ENCODE measurements at regions of chr3 and their contacts with region 1.

Region 1: GRCh38 chr3:128680602-128681368 is 30.2 kb upstream of the RPN1 start:
- DNase-seq: peak; percentile 93 to 98
- ATAC-seq: peak; percentile 87 to 97 (median 90)
- H3K4me3 ChIP-seq: peak overlapping the region; percentile 88
- H3K4me3 Mint-ChIP-seq: peak overlapping the region; percentile 93
- H3K27ac ChIP-seq: peak overlapping the region; percentile 99
- H3K27ac Mint-ChIP-seq: peak overlapping the region; percentile 81 to 99
- H3K4me1 ChIP-seq: peaks cover 42% of the 10 kb centered on the region
- H3K4me1 Mint-ChIP-seq: peaks cover 28 to 36% of the 10 kb centered on the region in 2 donors
- H3K27me3 ChIP-seq: no peaks in the 10 kb centered on the region
- H3K27me3 Mint-ChIP-seq: peaks cover 6 to 7% of the 10 kb centered on the region in 2 donors
- CTCF ChIP-seq: peak; percentile 95

Region 2: GRCh38 chr3:128617557-128618397 is 63.0 kb before region 1 on chr3:
- intact Hi-C with region 1: loop called (anchors 2 kb)
- DNase-seq: peak; percentile 99 to 100
- ATAC-seq: peak; percentile 91 to 97 (median 93)
- H3K4me3 ChIP-seq: peak overlapping the region; percentile 90
- H3K4me3 Mint-ChIP-seq: peak overlapping the region; percentile 98
- H3K27ac ChIP-seq: peak overlapping the region; percentile 93
- H3K27ac Mint-ChIP-seq: peak overlapping the region; percentile 91 to 97
- H3K4me1 ChIP-seq: peaks cover 22% of the 10 kb centered on the region
- H3K4me1 Mint-ChIP-seq: peaks cover 25 to 49% of the 10 kb centered on the region in 2 donors
- H3K27me3 ChIP-seq: no peaks in the 10 kb centered on the region
- H3K27me3 Mint-ChIP-seq: no peaks in the 10 kb centered on the region
- CTCF ChIP-seq: peak; percentile 99

Region 3: DNA sequence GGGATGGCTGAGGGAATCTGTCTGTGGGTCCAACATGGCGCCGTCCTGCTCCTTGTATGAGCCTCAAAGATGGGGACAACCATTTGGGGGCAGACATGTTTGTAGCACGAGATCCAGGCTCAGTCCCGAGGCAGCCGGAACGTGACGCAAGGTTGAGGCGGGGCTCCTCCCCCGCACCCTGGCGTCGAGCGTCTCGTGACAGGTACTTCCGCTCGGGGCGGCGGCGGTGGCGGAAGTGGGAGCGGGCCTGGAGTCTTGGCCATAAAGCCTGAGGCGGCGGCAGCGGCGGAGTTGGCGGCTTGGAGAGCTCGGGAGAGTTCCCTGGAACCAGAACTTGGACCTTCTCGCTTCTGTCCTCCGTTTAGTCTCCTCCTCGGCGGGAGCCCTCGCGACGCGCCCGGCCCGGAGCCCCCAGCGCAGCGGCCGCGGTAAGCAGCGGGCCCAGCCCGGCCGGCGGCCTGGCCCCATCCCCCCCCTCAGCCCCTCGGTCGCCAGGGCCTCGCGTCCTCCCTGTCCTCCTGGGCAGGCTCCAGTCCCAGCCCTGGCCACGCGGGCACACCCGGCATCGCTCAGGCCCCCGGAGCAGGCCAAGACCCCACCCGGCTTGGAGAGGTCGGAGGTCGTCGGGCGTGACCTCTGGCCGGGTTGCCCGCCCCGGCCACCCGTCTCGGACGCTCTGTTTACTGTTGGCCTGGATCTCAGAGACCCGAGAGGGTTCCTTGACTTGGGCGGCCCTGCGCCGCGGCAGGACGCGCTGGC is 45.3 kb after region 1 on chr3 and contains the start of gene RAB7A:
- intact Hi-C with region 1: loop called (anchors 1 kb)
- DNase-seq: peak; percentile 96 to 99
- ATAC-seq: peak; percentile 90 to 97 (median 95)
- H3K4me3 ChIP-seq: peak within 1 kb of the TSS; percentile 83
- H3K4me3 Mint-ChIP-seq: peak within 1 kb of the TSS; percentile 99
- H3K27ac ChIP-seq: peak within 1 kb of the TSS; percentile 75
- H3K27ac Mint-ChIP-seq: peak within 1 kb of the TSS; percentile 95 to 98
- H3K4me1 ChIP-seq: peaks cover 26% of the 10 kb centered on the region
- H3K4me1 Mint-ChIP-seq: peaks cover 53 to 58% of the 10 kb centered on the region in 2 donors
- H3K27me3 ChIP-seq: no peaks in the 10 kb centered on the region
- H3K27me3 Mint-ChIP-seq: peaks cover 2 to 8% of the 10 kb centered on the region in 2 donors
- CTCF ChIP-seq: no peak
- total RNA-seq, gene RAB7A: 218 to 233 (median 224) TPM

Region 4: DNA sequence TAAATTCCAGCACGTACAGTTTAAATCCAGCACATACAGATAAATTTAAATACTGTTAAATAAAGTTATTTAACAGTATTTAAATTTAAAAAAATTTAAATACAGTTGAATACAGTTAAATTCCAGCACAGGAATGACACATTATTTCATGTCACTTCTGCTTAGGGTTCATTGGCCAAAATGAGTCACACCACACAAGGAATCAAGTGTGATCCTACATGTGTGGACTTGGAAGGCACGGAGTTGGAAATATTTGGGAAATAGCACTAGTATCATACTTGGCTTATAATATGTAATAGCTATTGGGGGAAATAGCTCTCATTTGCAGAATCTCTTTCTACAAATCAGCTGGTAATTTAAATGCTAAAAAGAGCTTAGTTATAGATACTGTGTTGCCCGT is 55.8 kb after region 1 on chr3:
- intact Hi-C with region 1: no loop called
- DNase-seq: no peak
- ATAC-seq: no peak
- H3K4me3 ChIP-seq: no peak overlapping the region
- H3K4me3 Mint-ChIP-seq: no peak overlapping the region
- H3K27ac ChIP-seq: no peak overlapping the region
- H3K27ac Mint-ChIP-seq: peak overlapping the region in 1 of 2 donors; percentile 77
- H3K4me1 ChIP-seq: peaks cover 24% of the 10 kb centered on the region
- H3K4me1 Mint-ChIP-seq: peaks cover 67 to 76% of the 10 kb centered on the region in 2 donors
- H3K27me3 ChIP-seq: no peaks in the 10 kb centered on the region
- H3K27me3 Mint-ChIP-seq: no peaks in the 10 kb centered on the region
- CTCF ChIP-seq: no peak

Region 5: DNA sequence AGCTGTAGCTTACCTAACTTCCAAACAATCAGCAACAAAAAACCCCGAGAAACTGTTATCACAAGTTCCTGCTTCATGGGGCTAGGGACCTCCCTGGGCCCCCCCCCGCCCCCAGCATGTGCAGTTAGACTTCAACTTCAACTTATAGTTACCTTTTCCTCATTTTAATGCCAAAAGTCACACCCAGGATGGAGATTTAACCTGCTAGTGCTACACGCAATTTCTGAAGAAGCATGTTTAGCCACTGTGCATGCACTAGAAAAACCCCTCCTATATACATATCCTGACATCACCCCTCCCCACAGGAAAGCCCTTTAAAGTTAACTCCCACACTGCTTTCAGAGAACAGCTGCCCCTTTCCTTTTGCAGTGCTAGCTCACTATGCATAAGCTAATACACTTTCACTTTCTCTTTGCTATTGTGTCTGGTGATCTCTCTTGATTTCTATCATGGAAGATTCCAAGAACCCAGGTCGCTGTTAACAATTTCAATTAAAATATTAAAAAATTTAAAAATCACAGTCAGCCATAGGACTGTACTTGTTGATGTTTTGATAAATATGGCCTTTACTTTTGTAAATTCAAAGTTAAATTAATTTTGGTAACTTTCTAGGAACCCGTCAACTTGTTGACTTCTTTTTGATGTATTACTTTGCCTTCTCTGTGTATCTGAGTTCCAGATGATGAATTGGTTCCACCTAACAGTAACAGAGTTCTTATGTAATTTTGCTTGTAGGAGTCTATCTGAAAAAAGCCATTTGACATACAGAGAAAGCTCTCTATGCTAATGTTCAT is 123.4 kb after region 1 on chr3:
- intact Hi-C with region 1: loop called (anchors 2 kb)
- DNase-seq: peak; percentile 21 to 89
- ATAC-seq: peak; percentile 93 to 95 (median 95)
- H3K4me3 ChIP-seq: peak overlapping the region; percentile 10
- H3K4me3 Mint-ChIP-seq: peak overlapping the region; percentile 79
- H3K27ac ChIP-seq: peak overlapping the region; percentile 82
- H3K27ac Mint-ChIP-seq: peak overlapping the region; percentile 89 to 95
- H3K4me1 ChIP-seq: peaks cover 12% of the 10 kb centered on the region
- H3K4me1 Mint-ChIP-seq: peaks cover 47 to 52% of the 10 kb centered on the region in 2 donors
- H3K27me3 ChIP-seq: no peaks in the 10 kb centered on the region
- H3K27me3 Mint-ChIP-seq: no peaks in the 10 kb centered on the region
- CTCF ChIP-seq: no peak

Region 6: GRCh38 chr3:128814519-128815317 is 133.9 kb after region 1 on chr3:
- intact Hi-C with region 1: no loop called
- DNase-seq: no peak
- ATAC-seq: peak in 1 of 3 donors; percentile 44
- H3K4me3 ChIP-seq: no peak overlapping the region
- H3K4me3 Mint-ChIP-seq: no peak overlapping the region
- H3K27ac ChIP-seq: no peak overlapping the region
- H3K27ac Mint-ChIP-seq: peak overlapping the region; percentile 56 to 58
- H3K4me1 ChIP-seq: no peaks in the 10 kb centered on the region
- H3K4me1 Mint-ChIP-seq: peaks cover 0 to 16% of the 10 kb centered on the region in 2 donors
- H3K27me3 ChIP-seq: no peaks in the 10 kb centered on the region
- H3K27me3 Mint-ChIP-seq: no peaks in the 10 kb centered on the region
- CTCF ChIP-seq: no peak

Region 7: GRCh38 chr3:128879125-128879969 is 198.6 kb after region 1 on chr3 and contains the start of gene ACAD9:
- intact Hi-C with region 1: loop called (anchors 2 kb)
- DNase-seq: peak; percentile 98 to 99
- ATAC-seq: peak; percentile 90 to 97 (median 95)
- H3K4me3 ChIP-seq: peak within 1 kb of the TSS; percentile 74
- H3K4me3 Mint-ChIP-seq: peak within 1 kb of the TSS; percentile 81
- H3K27ac ChIP-seq: peak within 1 kb of the TSS; percentile 93
- H3K27ac Mint-ChIP-seq: peak within 1 kb of the TSS; percentile 90 to 92
- H3K4me1 ChIP-seq: peaks cover 25% of the 10 kb centered on the region
- H3K4me1 Mint-ChIP-seq: peaks cover 56 to 61% of the 10 kb centered on the region in 2 donors
- H3K27me3 ChIP-seq: no peaks in the 10 kb centered on the region
- H3K27me3 Mint-ChIP-seq: peaks cover 3 to 4% of the 10 kb centered on the region in 2 donors
- CTCF ChIP-seq: no peak
- total RNA-seq, gene ACAD9: 43.4 to 71.3 (median 54.2) TPM

Measured in natural killer cell (primary cell).